Dendritic cell treated with granulocyte-macrophage colony-stimulating factor and Interleukin-4, amounts not matched to agents 40 ng/mL and 50 ng/mL, for 4 days (primary cell): ENCODE measurements at regions of chr5 and their contacts with region 1.

Region 1: DNA sequence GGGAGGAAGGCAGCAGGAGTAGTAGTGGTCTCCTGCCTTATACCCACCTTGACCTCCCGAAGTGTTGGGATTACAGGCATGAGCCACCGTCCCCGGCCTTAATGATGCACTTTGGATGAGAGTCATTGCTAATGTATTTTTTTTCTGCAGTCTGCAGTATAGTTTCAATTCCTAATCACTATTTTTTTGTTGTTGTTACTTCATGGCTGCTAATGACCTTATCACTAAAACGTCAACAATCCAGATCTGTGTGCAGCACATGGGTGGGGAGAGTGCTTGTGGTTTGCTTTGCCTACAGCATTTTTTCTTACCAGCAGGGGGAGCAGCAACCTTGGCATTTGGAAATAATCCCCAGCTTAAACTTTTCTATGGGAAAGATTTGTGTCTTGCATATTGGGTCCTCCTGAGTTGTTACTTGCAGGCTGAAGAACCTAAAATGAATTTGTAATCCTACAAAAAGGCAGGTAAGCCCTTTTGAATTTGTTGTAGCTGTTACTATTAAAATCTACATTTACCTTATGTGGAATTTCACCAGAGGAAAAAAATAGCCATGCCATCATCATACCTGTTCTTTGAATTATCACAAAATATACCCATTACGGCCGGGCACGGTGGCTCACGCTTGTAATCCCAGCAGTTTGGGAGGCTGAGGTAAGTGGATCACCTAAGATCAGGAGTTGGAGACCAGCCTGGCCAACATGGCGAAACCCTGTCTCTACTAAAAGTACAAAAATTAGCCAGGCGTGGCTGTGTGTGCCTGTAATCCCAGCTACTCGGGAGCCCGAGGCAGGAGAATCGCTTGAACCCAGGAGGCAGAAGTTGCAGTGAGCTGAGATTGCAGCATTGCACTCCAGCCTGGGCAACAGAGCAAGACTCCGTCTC is 6.3 kb upstream of the MED7 start:
- H3K4me3 Mint-ChIP-seq: no peak overlapping the region
- H3K27ac Mint-ChIP-seq: no peak overlapping the region
- H3K4me1 Mint-ChIP-seq: peaks cover 6% of the 10 kb centered on the region
- H3K27me3 Mint-ChIP-seq: peaks cover 12% of the 10 kb centered on the region

Region 2: DNA sequence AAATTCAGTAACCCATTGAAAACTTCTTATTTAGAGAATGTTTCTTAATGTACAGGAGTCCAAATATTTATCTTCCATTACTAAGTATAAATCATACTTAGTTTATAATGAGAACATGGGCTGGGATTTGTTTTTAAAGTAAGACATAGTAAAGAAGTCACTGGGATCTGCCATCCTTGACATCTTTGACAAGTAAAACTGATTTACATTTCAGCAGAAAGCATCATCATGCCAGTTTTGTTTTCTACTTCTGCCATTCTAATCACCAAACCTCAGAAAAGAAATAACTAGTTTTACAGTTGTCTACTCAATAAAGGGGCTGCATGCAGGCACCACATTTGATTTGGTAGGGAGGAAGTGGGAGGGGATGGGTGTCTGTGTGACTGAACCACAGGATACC is 520.6 kb before region 1 on chr5:
- intact Hi-C with region 1: no loop called
- H3K4me3 Mint-ChIP-seq: no peak overlapping the region
- H3K27ac Mint-ChIP-seq: no peak overlapping the region
- H3K4me1 Mint-ChIP-seq: no peaks in the 10 kb centered on the region
- H3K27me3 Mint-ChIP-seq: no peaks in the 10 kb centered on the region

Region 3: GRCh38 chr5:157253547-157253946 is 104.6 kb after region 1 on chr5:
- intact Hi-C with region 1: loop called (anchors 2 kb)
- H3K4me3 Mint-ChIP-seq: no peak overlapping the region
- H3K27ac Mint-ChIP-seq: peak overlapping the region; percentile 61
- H3K4me1 Mint-ChIP-seq: peaks cover 27% of the 10 kb centered on the region
- H3K27me3 Mint-ChIP-seq: no peaks in the 10 kb centered on the region

Region 4: GRCh38 chr5:157312492-157312891 is 163.5 kb after region 1 on chr5:
- intact Hi-C with region 1: loop called (anchors 1 kb)
- H3K4me3 Mint-ChIP-seq: no peak overlapping the region
- H3K27ac Mint-ChIP-seq: no peak overlapping the region
- H3K4me1 Mint-ChIP-seq: no peaks in the 10 kb centered on the region
- H3K27me3 Mint-ChIP-seq: no peaks in the 10 kb centered on the region

Region 5: GRCh38 chr5:157471709-157472108 is 322.7 kb after region 1 on chr5:
- intact Hi-C with region 1: loop called (anchors 5 kb)
- H3K4me3 Mint-ChIP-seq: no peak overlapping the region
- H3K27ac Mint-ChIP-seq: no peak overlapping the region
- H3K4me1 Mint-ChIP-seq: peaks cover 39% of the 10 kb centered on the region
- H3K27me3 Mint-ChIP-seq: no peaks in the 10 kb centered on the region